GM13976 (cell line): ENCODE measurements at regions of chr5 and their contacts with region 1.

Region 1: DNA sequence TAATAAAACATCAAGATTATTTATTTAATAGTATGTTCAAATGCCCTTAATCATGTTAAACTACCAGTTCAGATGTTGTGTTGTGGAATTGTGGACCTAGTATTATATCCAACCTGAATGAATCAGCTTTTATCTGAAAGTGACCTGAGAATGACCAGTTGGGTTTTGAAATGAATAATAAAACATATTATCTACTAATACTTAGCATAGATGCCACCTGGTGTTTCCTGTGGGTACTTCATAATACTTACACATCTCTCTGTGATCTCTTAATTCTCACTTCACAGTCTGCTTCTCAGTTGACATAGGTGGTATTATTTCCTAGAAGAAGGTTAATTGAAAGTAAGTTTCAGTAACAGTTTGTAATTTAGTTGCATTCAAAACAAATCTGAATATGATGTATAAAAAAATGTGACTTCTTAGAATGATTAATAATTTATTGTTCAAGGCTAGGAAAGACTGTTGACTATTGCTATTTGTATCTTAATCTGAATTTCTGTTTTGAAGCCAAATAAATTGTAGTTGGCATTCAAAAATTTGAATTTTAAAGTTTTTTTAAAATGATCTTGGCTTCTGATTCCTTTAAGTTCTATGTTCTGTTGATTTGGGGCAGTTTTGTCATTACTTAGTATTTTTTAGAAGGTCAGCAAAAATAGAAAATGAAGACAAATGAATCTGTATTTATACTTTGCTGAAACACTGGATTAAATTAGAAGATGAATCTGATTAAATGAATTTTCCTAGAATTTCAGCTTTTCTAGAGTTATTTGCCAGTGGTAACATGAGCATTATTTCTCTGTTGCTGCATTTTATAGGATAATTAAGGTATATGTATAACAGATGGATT is 48.2 kb downstream of the KIF2A start:
- DNase-seq: peak; percentile 40
- CTCF ChIP-seq: peak; percentile 32

Region 2: GRCh38 chr5:62231576-62231975 is 122.7 kb before region 1 on chr5:
- in situ Hi-C with region 1: loop called (anchors 10 kb)
- DNase-seq: no peak
- CTCF ChIP-seq: no peak